ENCODE measurements at regions of chrX and their contacts with region 1.

Region 1: GRCh38 chrX:15737960-15738902 is at the start of gene CA5B:
- DNase-seq: peak; percentile 97
- ATAC-seq: peak; percentile 94
- H3K4me3 Mint-ChIP-seq: peak within 1 kb of the TSS; percentile 82
- H3K27ac Mint-ChIP-seq: peak within 1 kb of the TSS; percentile 78
- H3K4me1 Mint-ChIP-seq: peaks cover 40% of the 10 kb centered on the region
- H3K27me3 Mint-ChIP-seq: no peaks in the 10 kb centered on the region
- total RNA-seq, gene CA5B: 13.3 to 17.7 TPM

Region 2: DNA sequence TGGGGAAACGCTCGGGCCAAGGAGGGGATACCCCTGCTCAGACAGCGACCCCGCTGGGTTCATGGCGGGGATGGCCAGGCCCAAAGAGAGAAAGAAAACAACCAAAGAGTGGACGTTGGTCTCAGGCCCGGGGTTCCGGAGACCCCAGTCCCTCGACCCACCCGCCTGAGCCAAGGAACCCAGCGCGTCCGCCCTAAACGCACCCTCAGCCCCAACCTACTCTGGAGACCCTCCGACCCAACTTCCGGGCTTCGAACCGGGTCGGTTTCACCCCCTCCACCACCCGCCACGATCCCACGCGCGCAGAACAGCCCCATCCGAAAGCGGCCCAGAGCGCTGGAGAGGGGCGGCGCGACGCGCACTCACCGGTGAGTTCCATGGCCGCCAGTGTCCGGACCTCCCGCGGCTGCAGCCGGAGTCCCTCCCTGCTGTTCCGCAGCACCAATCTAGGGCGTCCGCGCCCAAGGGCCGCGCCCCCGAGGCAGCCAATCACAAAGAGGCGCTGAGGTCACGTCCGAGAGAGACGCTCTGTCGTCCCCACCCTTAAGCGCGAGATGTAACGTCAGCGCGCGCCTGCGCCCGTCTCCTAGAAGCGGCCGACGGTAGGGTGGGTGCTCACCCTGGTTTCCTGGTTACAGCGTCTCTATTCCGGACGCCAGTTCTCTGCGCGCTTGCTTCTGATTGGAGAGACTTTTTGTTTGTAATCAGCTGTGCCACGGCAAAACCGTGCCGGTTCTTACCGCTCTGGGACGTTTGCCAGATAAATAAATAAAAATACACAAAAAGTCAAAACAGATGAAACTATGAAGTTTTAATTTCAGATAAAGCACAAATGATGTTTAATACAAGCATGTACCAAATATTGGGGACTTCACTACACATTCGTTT is 402.9 kb before region 1 on chrX and contains the start of gene PIGA:
- CTCF ChIA-PET with region 1: no interaction called
- POLR2A ChIA-PET with region 1: no interaction called
- intact Hi-C with region 1: loop called in 1 of 2 experiments (anchors 1 kb)
- DNase-seq: peak; percentile 94
- ATAC-seq: peak; percentile 97
- H3K4me3 Mint-ChIP-seq: peak within 1 kb of the TSS; percentile 84
- H3K27ac Mint-ChIP-seq: peak within 1 kb of the TSS; percentile 91
- H3K4me1 Mint-ChIP-seq: peaks cover 14% of the 10 kb centered on the region
- H3K27me3 Mint-ChIP-seq: peaks cover 4% of the 10 kb centered on the region
- total RNA-seq, gene PIGA: 37.2 to 37.9 TPM

Region 3: DNA sequence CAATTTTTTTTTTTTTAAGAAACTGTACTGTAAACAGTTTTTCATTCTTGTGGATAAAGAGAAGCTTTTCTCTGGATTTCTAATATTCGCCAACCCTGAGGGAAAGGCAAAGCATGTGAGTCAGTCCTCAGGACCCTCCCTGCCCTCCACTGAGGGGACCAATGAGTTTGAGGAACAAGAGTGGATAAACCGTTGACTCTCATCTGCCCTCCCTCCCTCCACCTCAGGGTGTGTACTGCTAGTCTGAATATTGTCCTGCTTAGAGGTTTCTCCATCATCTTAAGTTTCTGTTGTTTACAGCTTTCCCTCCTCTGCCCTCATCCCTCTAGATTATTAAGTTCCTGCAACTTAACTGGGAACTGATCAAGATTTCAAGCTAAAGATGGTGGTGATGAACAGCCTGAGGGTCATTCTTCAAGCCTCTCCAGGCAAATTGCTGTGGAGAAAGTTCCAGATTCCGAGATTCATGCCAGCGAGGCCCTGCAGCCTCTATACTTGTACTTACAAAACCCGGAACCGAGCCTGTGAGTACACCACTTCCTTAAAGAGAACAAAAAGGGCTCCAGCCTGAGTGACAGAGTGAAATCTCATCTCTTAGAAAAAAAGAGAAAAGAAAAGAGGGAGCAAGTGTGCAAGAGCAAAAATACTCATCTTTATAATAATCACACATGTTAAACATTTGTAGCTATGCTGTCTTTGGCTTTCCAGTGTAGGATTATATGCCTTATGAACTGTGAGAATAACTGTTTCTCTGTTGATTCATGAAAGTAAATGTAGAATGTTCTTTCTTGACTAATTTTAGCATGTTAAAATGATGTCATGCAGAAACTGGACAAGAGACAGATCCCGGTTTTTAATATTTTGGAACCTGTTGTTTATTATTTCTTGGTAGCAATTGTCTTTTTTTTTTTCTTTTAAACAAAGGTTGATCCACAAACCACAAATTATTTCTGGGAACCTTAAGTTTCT is 11.7 kb after region 1 on chrX:
- CTCF ChIA-PET with region 1: interaction called, 6 read pairs
- POLR2A ChIA-PET with region 1: interaction called, 3 read pairs
- intact Hi-C with region 1: loop called (anchors 1 kb)
- DNase-seq: peak; percentile 31
- ATAC-seq: peak; percentile 72
- H3K4me3 Mint-ChIP-seq: peak overlapping the region; percentile 49
- H3K27ac Mint-ChIP-seq: peak overlapping the region; percentile 90
- H3K4me1 Mint-ChIP-seq: peaks cover 72% of the 10 kb centered on the region
- H3K27me3 Mint-ChIP-seq: no peaks in the 10 kb centered on the region

Region 4: GRCh38 chrX:15882704-15883539 is 144.7 kb after region 1 on chrX:
- CTCF ChIA-PET with region 1: no interaction called
- POLR2A ChIA-PET with region 1: no interaction called
- intact Hi-C with region 1: no loop called
- DNase-seq: no peak
- ATAC-seq: peak; percentile 36
- H3K4me3 Mint-ChIP-seq: no peak overlapping the region
- H3K27ac Mint-ChIP-seq: no peak overlapping the region
- H3K4me1 Mint-ChIP-seq: peaks cover 15% of the 10 kb centered on the region
- H3K27me3 Mint-ChIP-seq: no peaks in the 10 kb centered on the region

Region 5: GRCh38 chrX:16719334-16720084 is 981.3 kb after region 1 on chrX and contains the start of gene SYAP1:
- CTCF ChIA-PET with region 1: no interaction called
- POLR2A ChIA-PET with region 1: no interaction called
- intact Hi-C with region 1: loop called in 1 of 2 experiments (anchors 10 kb)
- DNase-seq: peak; percentile 94
- ATAC-seq: peak; percentile 96
- H3K4me3 Mint-ChIP-seq: peak within 1 kb of the TSS; percentile 74
- H3K27ac Mint-ChIP-seq: peak within 1 kb of the TSS; percentile 88
- H3K4me1 Mint-ChIP-seq: peaks cover 22% of the 10 kb centered on the region
- H3K27me3 Mint-ChIP-seq: no peaks in the 10 kb centered on the region
- total RNA-seq, gene SYAP1: 22.8 to 31.4 TPM